Activated CD4-positive, alpha-beta memory T cell treated with anti-CD3 and anti-CD28 coated beads for 36 hours (primary cell): ENCODE measurements at regions of chr5 and their contacts with region 1.

Region 1: GRCh38 chr5:77076961-77077823 is 9.9 kb downstream of the ZBED3 start:
- DNase-seq: peak; percentile 71
- H3K4me3 Mint-ChIP-seq: peak overlapping the region; percentile 50
- H3K27ac Mint-ChIP-seq: no peak overlapping the region
- H3K4me1 Mint-ChIP-seq: peaks cover 5% of the 10 kb centered on the region
- H3K27me3 Mint-ChIP-seq: no peaks in the 10 kb centered on the region

Region 2: DNA sequence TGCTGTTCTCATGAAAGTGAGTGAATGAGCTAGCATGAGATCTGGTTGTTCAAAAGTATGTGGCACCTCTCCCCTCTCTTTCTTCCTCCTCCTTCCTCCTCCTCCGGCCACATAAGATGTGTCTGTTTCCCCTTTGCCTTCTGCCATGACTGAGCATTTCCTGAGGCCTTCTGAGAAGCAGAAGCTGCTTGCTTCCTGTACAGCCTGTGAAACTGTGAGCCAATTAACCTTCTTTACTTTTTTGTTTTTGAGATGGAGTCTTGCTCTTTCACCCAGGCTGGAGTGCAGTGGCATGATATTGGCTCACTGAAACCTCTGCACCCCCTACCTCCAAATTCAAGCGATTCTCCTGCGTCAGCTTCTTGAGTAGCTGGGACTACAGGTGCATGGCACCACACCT is 221.2 kb before region 1 on chr5:
- CTCF ChIA-PET with region 1: interaction called, 10 read pairs
- POLR2A ChIA-PET with region 1: no interaction called
- intact Hi-C with region 1: no loop called
- DNase-seq: peak; percentile 61
- H3K4me3 Mint-ChIP-seq: no peak overlapping the region
- H3K27ac Mint-ChIP-seq: peak overlapping the region; percentile 88
- H3K4me1 Mint-ChIP-seq: peaks cover 37% of the 10 kb centered on the region
- H3K27me3 Mint-ChIP-seq: no peaks in the 10 kb centered on the region

Region 3: DNA sequence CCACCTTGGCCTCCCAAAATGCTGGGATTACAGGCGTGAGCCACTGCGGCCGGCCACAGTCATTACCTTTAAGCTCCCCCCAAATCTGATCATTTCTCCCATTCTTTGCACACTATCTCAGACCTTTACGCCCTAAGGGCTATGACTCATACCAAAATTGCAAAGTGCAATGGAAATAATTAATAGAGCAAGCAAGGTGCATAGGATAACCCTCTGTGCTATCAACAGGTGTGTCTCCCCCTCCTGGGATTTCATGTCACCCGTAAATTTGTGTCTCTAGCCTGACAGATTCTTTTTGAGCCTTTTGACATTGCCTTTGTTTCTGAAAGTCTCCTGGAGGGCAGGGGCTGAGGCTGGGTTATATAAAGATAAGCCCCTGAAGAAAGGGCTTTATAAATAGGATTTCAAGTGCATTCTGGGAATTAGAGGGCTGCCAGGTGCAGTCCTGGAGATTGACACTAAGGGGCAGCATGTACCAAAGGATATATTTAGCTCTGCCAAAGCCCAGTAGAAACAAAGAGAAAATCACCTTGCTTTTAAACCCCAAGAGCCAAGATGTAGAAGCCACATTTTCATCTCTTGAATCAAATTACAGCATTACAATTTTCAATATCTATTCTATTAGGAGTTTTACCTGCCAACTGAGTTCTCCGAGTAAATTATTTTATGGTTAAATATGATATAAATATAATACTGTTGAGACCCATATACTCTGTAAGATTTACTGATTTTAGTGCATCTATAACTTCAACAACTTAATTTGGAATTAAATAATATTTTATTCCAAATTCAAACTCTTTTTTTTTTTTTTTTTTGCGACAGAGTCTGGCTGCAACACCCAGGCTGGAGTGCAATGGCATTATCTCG is 209.1 kb before region 1 on chr5:
- CTCF ChIA-PET with region 1: interaction called, 52 read pairs
- POLR2A ChIA-PET with region 1: no interaction called
- intact Hi-C with region 1: loop called (anchors 1 kb)
- DNase-seq: peak; percentile 74
- H3K4me3 Mint-ChIP-seq: no peak overlapping the region
- H3K27ac Mint-ChIP-seq: no peak overlapping the region
- H3K4me1 Mint-ChIP-seq: no peaks in the 10 kb centered on the region
- H3K27me3 Mint-ChIP-seq: no peaks in the 10 kb centered on the region

Region 4: DNA sequence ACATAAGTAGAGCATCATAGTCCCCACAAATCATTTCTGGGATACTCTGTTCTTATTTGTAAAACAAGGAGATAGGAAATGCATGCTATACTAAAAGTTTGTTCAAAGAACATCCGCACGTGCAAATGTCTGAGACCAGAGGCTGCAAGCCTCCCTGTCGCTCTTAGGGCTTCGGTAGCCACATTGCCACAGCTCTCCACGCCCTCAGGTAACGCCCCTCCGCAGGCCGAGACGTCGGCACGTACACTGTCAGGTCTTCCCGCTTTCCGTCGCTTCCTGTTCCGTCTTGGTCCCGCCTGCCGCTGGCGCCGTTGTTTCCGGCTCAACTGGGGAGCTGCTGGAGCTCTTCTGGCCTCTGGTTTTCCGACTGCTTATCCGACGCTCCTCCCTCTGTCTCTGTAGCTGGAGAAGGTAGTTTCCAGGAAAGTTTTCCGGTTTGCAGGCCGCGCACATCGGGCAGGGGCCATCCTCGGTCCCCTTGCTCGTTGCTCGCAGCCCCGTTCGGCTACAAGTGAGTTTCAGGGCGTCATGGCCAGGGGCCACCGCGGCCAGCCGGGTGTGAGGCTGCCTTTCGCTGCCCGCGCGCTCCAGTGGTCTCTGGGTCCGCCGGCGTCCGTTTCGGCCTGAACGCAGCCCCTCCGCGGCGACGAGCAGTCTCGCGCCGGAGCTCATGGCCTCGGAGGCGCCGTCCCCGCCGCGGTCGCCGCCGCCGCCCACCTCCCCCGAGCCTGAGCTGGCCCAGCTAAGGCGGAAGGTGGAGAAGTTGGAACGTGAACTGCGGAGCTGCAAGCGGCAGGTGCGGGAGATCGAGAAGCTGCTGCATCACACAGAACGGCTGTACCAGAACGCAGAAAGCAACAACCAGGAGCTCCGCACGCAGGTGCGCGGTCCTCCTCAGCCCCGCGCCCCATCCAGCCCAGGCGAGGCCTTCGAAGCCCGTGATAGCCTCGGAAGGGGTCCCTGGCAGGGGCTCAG is 46.8 kb before region 1 on chr5 and contains the start of gene AGGF1:
- CTCF ChIA-PET with region 1: interaction called, 22 read pairs
- POLR2A ChIA-PET with region 1: interaction called, 5 read pairs
- intact Hi-C with region 1: no loop called
- DNase-seq: peak; percentile 96
- H3K4me3 Mint-ChIP-seq: peak within 1 kb of the TSS; percentile 88
- H3K27ac Mint-ChIP-seq: peak within 1 kb of the TSS; percentile 78
- H3K4me1 Mint-ChIP-seq: peaks cover 32% of the 10 kb centered on the region
- H3K27me3 Mint-ChIP-seq: no peaks in the 10 kb centered on the region
- total RNA-seq, gene AGGF1: 26.5 to 27.6 TPM

Region 5: GRCh38 chr5:77180167-77181081 is 103.2 kb after region 1 on chr5:
- CTCF ChIA-PET with region 1: no interaction called
- POLR2A ChIA-PET with region 1: no interaction called
- intact Hi-C with region 1: no loop called
- DNase-seq: peak; percentile 11
- H3K4me3 Mint-ChIP-seq: no peak overlapping the region
- H3K27ac Mint-ChIP-seq: no peak overlapping the region
- H3K4me1 Mint-ChIP-seq: peaks cover 4% of the 10 kb centered on the region
- H3K27me3 Mint-ChIP-seq: peaks cover 27% of the 10 kb centered on the region